ENCODE measurements at regions of chr20 and their contacts with region 1.

Region 1: GRCh38 chr20:33666293-33667244 is at the start of gene ACTL10:
- DNase-seq: peak; percentile 82 to 98 (median 88)
- ATAC-seq: peak; percentile 89
- H3K4me3 ChIP-seq: no peak within 1 kb of the TSS
- H3K27ac ChIP-seq: peak within 1 kb of the TSS; percentile 41; the same call in 2 of the 3 replicates
- H3K4me1 ChIP-seq: peaks cover 21 to 63% of the 10 kb centered on the region in 2 experiments; a peak in 4 of 5 replicates
- H3K27me3 ChIP-seq: no peaks in the 10 kb centered on the region
- CTCF ChIP-seq: peak; percentile 56 to 67 (median 61); a peak in 5 of 6 replicates
- EP300 ChIP-seq: peak; percentile 12; the same call in 1 of the 2 replicates
- POLR2A ChIP-seq: peak; percentile 47; the same call in 1 of the 2 replicates
- RAD21 ChIP-seq: peak; percentile 48 to 56
- polyA plus RNA-seq, gene ACTL10: not detected

Region 2: DNA sequence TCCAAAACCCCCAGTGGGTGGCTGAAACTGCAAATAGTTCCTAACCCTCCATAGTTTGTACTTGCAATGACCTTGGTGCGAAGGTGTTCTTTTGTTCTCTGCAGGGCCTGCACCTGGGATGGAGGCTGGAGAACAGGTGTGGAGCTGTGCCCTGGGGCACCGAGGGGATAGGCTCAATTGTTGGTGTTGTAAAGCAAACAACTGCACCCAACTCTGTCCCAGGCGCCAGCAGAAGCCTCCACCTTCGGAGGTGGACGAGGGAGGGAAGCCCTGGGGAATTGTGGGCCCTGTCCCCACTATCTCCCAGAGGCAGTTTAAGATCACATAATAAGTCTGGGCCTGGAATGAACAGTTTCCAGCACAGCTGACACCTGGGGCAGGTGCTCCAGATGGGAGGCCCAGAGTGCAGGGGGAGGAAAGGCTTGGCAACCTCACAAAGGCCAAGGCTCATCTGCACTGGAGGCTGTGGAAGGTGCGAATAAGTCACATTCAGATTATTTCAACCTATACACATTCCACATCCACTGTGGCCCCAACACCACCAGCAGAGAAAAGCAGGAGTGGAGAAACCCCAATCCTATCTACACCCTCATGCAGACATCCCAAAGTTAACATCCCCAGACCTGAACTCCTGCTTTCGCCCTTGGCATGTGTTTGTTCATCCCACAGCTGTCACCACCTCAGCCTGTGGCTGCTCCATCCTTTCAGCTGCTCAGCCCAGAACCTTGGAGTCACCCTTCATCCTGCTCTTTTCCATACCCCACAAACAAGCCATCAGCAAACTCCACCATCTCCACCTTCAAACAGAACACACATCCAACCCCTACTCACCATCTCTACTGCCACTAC is 189.0 kb before region 1 on chr20:
- CTCF ChIA-PET with region 1: no interaction called
- POLR2A ChIA-PET with region 1: no interaction called
- in situ Hi-C with region 1: no loop called
- intact Hi-C with region 1: no loop called
- DNase-seq: no peak
- ATAC-seq: no peak
- H3K4me3 ChIP-seq: no peak overlapping the region
- H3K27ac ChIP-seq: no peak overlapping the region
- H3K4me1 ChIP-seq: peaks cover 2 to 14% of the 10 kb centered on the region in 2 experiments
- H3K27me3 ChIP-seq: peaks cover 5 to 16% of the 10 kb centered on the region in 2 experiments; a peak in 4 of 5 replicates
- CTCF ChIP-seq: no peak
- EP300 ChIP-seq: no peak
- POLR2A ChIP-seq: no peak
- RAD21 ChIP-seq: no peak

Region 3: DNA sequence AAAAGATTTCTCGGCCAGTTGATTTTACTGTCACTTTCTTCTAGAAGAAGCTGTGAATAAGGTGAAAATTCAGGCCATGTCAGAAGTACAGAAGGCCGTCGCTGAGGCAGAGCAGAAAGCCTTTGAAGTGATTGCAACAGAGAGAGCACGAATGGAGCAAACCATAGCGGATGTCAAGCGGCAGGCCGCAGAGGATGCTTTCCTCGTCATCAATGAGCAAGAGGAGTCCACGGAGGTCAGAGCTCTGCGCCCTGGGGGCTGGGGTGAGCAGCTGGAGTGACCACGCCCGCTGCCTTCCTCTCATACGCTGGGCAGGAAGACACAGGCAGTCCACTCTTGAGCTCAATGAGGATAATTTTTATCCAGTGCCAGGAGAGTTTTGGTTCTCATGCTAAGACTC is 26.3 kb before region 1 on chr20:
- CTCF ChIA-PET with region 1: no interaction called
- POLR2A ChIA-PET with region 1: no interaction called
- in situ Hi-C with region 1: no loop called
- intact Hi-C with region 1: no loop called
- DNase-seq: no peak
- ATAC-seq: no peak
- H3K4me3 ChIP-seq: no peak overlapping the region
- H3K27ac ChIP-seq: no peak overlapping the region
- H3K4me1 ChIP-seq: peaks cover 3 to 10% of the 10 kb centered on the region in 2 experiments; a peak in 2 of 5 replicates
- H3K27me3 ChIP-seq: no peaks in the 10 kb centered on the region
- CTCF ChIP-seq: no peak
- EP300 ChIP-seq: no peak
- POLR2A ChIP-seq: no peak
- RAD21 ChIP-seq: no peak

Region 4: DNA sequence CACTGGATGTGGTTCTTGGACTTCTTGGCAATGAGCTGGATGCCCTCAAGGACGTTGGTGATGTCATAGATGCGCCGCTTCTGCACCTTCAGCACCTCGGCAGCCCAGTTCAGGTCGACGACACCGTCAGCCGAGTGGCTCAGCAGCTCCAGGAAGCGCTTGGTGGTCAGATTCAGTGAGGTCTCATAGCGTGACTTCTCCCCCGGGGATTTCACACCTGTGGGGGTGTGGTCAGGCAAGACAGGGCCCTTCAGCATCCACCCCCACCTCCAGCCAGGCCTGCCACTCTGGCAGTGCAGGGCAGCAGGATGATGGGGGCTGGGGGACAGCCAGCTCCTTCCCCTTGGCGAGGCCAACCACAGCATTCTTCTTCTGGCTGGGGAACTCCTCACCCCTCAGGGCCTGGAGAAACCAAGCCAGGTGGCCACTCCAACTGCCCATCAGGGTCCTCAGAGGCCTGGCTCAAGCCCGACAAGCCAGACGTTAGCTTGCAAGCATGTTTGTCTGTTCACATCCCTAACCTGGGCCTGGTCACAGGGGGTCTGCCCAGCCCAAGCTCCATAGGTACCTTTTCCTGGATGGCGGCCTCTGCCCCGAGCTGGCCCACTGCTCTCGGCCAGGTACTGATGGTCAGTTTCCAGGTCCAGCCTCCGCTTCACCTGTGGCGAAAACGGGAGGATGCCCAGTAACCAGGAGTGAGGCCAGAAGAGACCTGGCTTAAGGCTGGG is 13.4 kb after region 1 on chr20:
- CTCF ChIA-PET with region 1: no interaction called
- POLR2A ChIA-PET with region 1: interaction called, 17 read pairs
- in situ Hi-C with region 1: no loop called
- intact Hi-C with region 1: no loop called
- DNase-seq: peak in 1 of 4 experiments; percentile 7
- ATAC-seq: no peak
- H3K4me3 ChIP-seq: no peak overlapping the region
- H3K27ac ChIP-seq: no peak overlapping the region
- H3K4me1 ChIP-seq: peaks cover 6 to 44% of the 10 kb centered on the region in 2 experiments
- H3K27me3 ChIP-seq: no peaks in the 10 kb centered on the region
- CTCF ChIP-seq: no peak
- EP300 ChIP-seq: no peak
- POLR2A ChIP-seq: no peak
- RAD21 ChIP-seq: no peak

Region 5: DNA sequence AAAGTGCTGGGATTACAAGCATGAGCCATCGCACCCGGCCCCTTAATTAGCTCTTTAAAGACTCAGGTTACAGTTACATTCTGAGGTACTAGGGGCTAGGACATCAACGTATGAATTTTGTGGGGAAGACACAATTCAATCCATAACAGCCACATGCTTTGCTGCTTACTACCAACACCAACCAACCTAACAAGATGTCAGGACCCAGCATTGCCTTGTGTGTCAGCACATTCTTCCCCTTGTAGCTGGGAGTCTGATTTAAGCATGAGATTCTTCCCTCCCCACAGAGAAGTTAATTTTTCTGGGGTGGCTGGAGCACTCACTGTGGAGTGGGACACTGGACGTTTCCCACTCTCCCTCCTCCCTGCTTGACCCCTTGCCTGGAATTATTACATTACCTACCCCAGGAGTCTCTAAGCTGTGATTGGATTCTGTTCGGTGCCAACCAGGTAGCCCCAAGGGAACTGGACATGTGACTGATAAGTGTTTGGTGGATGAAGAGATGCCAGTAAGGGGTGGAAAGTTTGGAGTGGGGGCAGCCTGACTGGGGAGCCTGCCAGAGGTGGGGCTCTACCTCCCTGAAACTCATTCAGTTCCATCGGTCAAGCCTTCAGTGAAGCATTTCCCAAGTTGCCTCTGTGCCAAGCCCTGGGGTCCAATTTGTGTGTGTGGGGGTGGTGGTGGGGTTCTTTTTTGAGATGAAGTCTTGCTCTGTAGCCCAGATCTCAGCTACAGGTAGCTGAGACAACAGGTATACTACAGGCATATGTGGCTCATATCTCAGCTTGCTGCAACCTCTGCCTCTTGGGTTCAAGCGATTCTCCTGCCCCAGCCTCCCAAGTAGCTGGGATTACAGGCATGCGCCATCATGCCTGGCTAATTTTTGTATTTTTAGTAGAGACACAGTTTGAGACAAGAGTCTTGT is 59.3 kb after region 1 on chr20:
- CTCF ChIA-PET with region 1: no interaction called
- POLR2A ChIA-PET with region 1: no interaction called
- in situ Hi-C with region 1: loop called (anchors 5 kb)
- intact Hi-C with region 1: no loop called
- DNase-seq: no peak
- ATAC-seq: no peak
- H3K4me3 ChIP-seq: no peak overlapping the region
- H3K27ac ChIP-seq: no peak overlapping the region
- H3K4me1 ChIP-seq: no peaks in the 10 kb centered on the region
- H3K27me3 ChIP-seq: no peaks in the 10 kb centered on the region
- CTCF ChIP-seq: no peak
- EP300 ChIP-seq: no peak
- POLR2A ChIP-seq: no peak
- RAD21 ChIP-seq: no peak